ENCODE measurements at regions of chr1 and their contacts with region 1.

Region 1: GRCh38 chr1:155591770-155592169 is 18.2 kb upstream of the MSTO1 start:
- DNase-seq: peak; percentile 25
- H3K4me3 Mint-ChIP-seq: no peak overlapping the region
- H3K27ac Mint-ChIP-seq: no peak overlapping the region
- H3K4me1 Mint-ChIP-seq: peaks cover 4% of the 10 kb centered on the region
- H3K27me3 Mint-ChIP-seq: no peaks in the 10 kb centered on the region

Region 2: GRCh38 chr1:155250633-155251449 is 340.9 kb before region 1 on chr1:
- intact Hi-C with region 1: loop called (anchors 1 kb)
- DNase-seq: peak; percentile 92
- H3K4me3 Mint-ChIP-seq: peak overlapping the region; percentile 12
- H3K27ac Mint-ChIP-seq: no peak overlapping the region
- H3K4me1 Mint-ChIP-seq: peaks cover 32% of the 10 kb centered on the region
- H3K27me3 Mint-ChIP-seq: no peaks in the 10 kb centered on the region